Ascending aorta (tissue), 2 donors: ENCODE measurements at regions of chr19 and their contacts with region 1.

Region 1: GRCh38 chr19:45779231-45780145 is 2.8 kb downstream of the DMPK start:
- DNase-seq: peak in 1 of 2 donors; percentile 89
- H3K4me3 ChIP-seq: peak overlapping the region; percentile 71 to 94
- H3K27ac ChIP-seq: peak overlapping the region; percentile 93 to 94
- H3K4me1 ChIP-seq: peaks cover 11 to 31% of the 10 kb centered on the region in 2 donors
- H3K27me3 ChIP-seq: no peaks in the 10 kb centered on the region
- CTCF ChIP-seq: peak; percentile 17 to 51 (median 42)

Region 2: GRCh38 chr19:45079063-45079910 is 700.2 kb before region 1 on chr19 and contains the start of gene GEMIN7:
- intact Hi-C with region 1: no loop called
- DNase-seq: peak in 1 of 2 donors; percentile 84
- H3K4me3 ChIP-seq: peak within 1 kb of the TSS; percentile 86 to 91
- H3K27ac ChIP-seq: peak within 1 kb of the TSS in 1 of 2 donors; percentile 15
- H3K4me1 ChIP-seq: peaks cover 7 to 10% of the 10 kb centered on the region in 2 donors
- H3K27me3 ChIP-seq: no peaks in the 10 kb centered on the region
- CTCF ChIP-seq: peak in 1 of 3 experiments; percentile 16
- total RNA-seq, gene GEMIN7: 48.2 TPM

Region 3: DNA sequence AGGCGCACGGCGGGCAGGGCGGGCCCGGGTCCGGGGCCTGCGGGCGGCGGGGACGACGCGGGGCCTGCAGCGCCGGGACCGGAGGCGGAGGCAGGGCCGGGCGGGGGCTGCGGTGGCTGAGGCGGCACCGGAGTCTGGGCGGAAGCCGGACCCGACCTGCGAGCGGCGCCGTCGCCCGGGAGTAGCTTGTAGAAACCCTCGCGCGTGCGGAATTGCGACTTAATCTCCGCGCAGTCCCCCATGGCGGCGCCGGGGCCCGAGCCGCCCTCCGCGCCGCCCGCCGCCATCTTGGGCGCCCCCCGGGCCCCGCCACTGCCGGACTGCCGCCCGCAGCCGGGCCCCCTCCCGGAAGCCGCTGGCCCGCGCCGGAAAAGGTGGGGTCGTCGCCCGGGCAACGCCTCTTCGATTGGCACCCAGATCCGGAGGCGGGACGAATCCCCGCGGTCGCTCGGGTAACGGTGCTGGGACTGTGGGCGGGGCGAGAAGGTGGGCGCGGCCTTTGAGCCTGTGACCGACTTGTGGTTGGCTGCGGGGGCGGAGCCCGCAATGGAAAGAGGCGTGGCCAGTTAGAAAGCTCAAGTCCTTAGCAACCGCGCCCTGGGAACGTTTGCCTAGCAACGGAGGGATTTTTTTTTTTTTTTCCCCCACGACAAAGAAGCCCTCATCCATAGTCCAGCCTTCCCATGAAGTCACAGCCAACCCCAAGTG is 13.1 kb after region 1 on chr19 and contains the start of gene DMWD:
- intact Hi-C with region 1: loop called (anchors 1 kb)
- DNase-seq: peak; percentile 95 to 100
- H3K4me3 ChIP-seq: peak within 1 kb of the TSS; percentile 68 to 87
- H3K27ac ChIP-seq: peak within 1 kb of the TSS; percentile 60 to 74
- H3K4me1 ChIP-seq: peaks cover 0 to 10% of the 10 kb centered on the region in 2 donors
- H3K27me3 ChIP-seq: no peaks in the 10 kb centered on the region
- CTCF ChIP-seq: no peak
- total RNA-seq, gene DMWD: 110 TPM

Region 4: DNA sequence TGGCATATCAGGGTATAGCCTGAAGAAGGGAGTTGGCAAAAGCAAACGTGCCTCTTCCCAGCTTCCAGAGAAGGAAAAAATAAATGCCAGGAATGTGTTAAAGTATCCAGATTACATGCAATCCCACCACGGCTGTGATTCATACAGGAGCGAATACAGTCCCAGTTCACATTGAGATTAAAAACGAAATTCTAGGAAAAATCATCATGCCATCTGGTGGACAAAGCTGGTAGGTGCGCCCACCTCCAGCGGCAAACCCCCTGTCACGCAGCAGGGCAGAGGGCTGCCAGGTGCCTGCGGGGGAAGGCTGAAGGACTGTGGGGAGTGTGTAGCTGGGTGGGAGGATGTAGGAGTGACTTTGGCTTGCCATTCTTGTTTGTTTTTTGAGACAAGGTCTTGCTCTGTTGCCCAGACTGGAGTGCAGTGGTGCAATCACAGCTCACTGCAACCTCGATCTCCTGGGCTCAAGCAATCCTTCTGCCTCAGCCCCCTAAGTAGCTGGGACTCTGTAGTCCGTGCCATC is 19.6 kb after region 1 on chr19:
- intact Hi-C with region 1: loop called (anchors 2 kb)
- DNase-seq: peak in 1 of 2 donors; percentile 86
- H3K4me3 ChIP-seq: no peak overlapping the region
- H3K27ac ChIP-seq: no peak overlapping the region
- H3K4me1 ChIP-seq: no peaks in the 10 kb centered on the region
- H3K27me3 ChIP-seq: no peaks in the 10 kb centered on the region
- CTCF ChIP-seq: peak; percentile 80 to 93 (median 90)